ENCODE measurements at regions of chr2 and their contacts with region 1.

Region 1: DNA sequence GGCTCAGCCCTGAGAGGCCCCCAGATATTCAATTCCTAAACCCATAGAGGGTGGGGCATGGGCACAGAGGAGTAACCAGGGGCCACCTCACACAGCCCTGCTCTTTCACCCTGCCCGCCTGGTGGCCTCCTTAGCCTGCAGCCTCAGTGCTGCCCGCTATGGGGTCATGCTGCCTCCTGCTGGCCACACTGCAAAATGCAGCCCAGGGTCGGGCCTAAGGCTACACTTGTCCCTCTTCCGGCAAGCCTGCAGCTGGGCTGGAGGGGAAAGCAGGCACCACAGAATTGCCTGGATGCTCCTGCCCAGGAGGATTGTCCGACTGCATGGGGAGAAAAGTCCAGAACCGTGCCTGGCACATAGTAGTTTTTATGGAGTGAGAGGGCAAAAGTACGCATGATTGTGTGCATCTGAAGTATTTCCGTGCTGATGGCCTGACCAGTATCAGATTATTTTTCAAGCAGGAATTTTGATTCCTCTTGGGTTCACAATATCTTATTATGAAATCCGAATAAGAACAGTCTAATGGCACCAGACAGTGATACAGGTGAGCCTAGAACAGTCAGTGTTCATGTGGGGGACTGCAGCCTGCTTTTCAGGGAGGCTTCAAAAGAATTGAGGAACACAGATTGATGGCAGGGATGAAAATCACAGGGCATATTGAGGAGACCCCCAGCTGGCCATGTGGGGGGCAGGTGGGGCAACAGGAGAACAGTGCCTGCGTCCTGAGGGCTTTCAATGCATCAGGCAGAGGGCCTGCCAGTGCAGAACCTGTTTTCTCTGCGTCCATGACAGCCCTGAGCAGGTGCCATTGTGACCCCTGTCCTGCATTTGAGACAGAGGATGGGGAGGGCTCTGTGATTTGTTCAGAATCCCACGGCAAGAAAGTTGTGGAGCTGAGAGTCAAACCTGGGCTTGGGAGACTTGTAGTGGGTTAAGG is 51.2 kb upstream of the ALPP start:
- DNase-seq: peak; percentile 71
- ATAC-seq: peak; percentile 60 to 64

Region 2: GRCh38 chr2:231907787-231908186 is 419.6 kb before region 1 on chr2:
- intact Hi-C with region 1: loop called in 1 of 2 experiments (anchors 2 kb)
- DNase-seq: no peak
- ATAC-seq: no peak

Region 3: DNA sequence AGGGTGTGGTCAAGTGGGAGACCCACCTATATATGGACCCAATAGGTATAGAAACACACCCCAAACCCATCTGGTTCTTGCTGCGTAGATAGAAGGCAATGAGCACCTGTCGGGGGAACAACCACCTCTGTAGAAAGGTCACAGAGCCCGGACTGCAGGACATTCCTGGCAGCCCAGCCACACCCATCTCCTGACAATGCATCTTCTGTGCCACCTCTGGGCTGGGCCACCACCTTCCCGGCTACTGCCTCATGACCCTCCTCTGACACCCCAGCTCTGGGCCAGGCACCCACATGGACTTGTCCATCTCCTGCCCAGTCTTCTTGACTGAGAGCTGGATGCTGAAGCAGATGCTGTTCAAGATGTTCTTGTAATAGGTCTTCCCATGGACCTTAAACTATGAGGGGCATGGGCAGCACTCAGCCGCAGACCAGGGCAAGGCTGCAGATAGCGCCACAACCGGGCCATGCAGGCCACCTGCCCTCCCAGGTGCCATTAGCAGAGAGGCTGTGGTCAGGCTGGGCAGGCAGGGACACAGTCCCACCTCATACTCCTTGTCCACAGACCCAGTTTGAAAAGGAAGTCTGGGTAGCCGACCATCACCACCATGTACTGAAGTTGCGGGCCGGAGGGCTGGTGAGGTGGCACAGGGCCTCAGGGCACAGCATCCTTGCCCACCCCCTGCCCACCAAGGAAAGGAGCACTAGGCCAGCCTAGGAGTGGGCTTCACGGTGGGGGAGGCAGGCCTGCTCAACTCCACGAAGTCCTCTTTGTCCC is 88.6 kb after region 1 on chr2:
- intact Hi-C with region 1: no loop called
- DNase-seq: no peak
- ATAC-seq: no peak

Region 4: DNA sequence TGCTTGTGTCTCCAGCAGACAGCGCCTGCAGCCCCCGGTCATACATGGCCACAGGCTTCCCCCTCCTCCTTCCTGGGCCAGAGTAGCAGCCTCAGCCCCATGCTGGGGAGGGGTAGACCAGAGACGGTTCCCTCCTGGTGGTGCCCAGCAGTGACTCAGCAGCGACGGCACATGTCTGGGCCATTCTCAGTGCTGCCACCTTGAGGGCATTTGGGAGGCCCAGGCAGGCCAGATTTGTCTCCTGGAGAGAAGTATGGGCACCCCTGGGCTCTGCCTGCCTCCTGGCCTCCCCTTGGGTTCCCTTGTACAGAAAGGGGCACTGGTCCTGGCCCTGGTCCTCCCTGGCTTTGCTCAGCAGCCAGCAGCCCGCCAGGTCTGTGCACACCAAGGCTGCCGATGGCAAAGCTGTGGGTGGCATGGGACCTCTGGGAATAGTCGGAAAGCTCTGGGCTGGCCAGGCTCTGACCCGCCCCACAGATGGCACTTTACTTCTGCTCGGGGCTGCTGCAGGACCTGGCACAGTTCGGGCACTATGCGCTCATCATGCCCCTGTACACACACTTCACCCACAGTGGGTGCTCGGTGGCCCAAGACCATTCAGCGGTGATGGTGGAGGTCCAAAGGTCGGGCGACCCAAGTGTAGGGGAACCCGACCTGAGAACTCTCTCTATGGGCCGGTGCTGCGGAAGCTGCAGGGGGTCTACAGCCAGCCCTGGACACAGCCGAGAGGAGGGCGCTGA is 117.2 kb after region 1 on chr2:
- intact Hi-C with region 1: no loop called
- DNase-seq: peak; percentile 52
- ATAC-seq: peak in 1 of 2 donors; percentile 8

Region 5: DNA sequence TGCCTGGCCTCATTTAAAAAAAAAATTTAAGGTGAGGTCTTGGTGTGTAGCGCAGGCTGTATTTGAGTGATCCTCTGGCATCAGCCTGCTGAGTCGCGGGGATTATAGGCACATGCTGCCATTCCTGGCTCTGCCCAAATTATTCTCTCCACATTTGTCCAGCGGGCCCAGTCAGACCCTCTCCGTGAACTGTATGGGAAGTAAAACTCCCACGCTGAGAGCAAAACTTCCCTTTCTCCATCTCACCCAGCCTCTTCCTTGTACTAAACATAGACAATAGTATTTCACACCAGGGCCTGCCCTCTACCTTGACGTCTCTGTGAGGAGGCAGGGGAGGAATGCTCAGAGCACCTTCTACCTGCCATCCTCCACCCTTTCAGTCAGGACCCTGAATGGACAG is 260.1 kb after region 1 on chr2:
- intact Hi-C with region 1: no loop called
- DNase-seq: no peak
- ATAC-seq: no peak

Region 6: GRCh38 chr2:232611551-232612218 is 284.3 kb after region 1 on chr2:
- intact Hi-C with region 1: no loop called
- DNase-seq: peak; percentile 52
- ATAC-seq: peak; percentile 44 to 64

Measured in left cardiac atrium (tissue), 4 donors.